PC-9 (cell line): ENCODE measurements at regions of chr6 and their contacts with region 1.

Region 1: DNA sequence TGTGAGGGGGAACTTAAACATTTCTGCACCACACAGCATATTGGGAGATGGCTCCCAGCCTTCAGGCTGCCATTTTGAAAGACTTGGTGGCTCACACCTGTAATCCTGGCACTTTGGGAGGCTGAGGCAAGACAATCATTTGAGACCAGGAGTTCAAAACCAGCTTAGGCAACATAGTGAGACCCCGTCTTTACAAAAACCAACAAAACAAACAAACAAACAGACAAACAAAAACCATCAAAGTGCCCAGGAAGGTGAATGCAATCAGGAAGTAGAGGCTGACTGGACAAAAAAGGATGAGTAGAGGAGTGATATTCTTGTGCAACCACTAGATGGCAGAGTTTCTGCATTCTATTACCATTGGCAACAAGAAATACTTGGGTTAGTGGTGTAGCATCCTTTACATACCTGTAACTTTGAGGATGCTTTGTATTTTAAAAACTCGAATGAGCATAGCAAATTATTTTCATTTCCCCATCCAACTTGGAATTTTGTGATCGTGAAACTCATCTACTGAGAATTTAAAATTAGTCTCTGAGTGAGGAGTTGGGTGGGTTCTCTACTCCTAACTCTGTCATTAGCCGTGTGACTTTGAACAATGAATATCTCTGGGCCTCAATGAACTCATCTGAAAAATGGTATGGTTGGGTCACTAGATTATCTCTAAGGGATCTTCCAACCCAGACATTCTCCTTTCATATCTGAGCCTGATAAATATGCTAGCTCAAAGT is 84.4 kb downstream of the CRYBG1 start:
- DNase-seq: peak; percentile 15 to 69
- H3K4me3 ChIP-seq: no peak overlapping the region
- H3K27ac ChIP-seq: no peak overlapping the region
- H3K4me1 ChIP-seq: peaks cover 24% of the 10 kb centered on the region
- H3K27me3 ChIP-seq: no peaks in the 10 kb centered on the region
- CTCF ChIP-seq: peak; percentile 89

Region 2: DNA sequence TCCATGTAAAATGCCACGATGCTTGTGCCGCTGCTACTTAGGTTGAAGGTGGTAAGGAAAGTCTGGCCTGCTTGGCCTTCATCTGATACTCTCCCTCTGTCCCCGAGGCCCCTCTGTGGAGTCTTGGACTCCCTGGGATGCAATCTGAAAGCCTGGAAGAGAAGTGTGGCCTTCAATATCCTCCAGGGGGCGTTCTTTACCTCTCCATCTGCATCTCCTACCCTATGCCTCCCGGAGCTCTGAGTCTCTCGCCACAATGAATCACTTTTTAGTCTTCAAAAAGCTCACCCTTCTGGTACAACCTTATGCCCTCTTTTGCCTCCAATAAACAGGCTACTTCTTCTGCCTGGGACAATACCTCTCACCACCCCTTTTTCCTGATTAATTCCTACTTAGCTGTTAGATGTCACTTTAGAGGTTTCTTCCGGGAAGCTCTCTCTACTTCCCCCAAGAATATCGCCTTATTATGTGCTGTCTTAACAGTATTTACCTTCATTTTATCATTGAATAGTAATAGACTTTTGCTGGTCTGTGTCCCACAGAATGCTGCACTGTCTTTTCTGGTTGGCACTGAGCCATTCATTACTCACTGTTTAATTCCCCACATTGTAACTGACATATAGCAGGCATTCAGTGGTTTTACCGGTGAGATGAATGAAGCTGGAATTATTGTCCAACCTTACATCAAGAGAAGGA is 105.5 kb before region 1 on chr6:
- CTCF ChIA-PET with region 1: interaction called, 8 read pairs
- POLR2A ChIA-PET with region 1: no interaction called
- intact Hi-C with region 1: loop called (anchors 1 kb)
- DNase-seq: peak; percentile 65 to 75
- H3K4me3 ChIP-seq: no peak overlapping the region
- H3K27ac ChIP-seq: peak overlapping the region; percentile 18; the same call in 1 of the 2 replicates
- H3K4me1 ChIP-seq: peaks cover 9% of the 10 kb centered on the region
- H3K27me3 ChIP-seq: no peaks in the 10 kb centered on the region
- CTCF ChIP-seq: peak; percentile 90

Region 3: DNA sequence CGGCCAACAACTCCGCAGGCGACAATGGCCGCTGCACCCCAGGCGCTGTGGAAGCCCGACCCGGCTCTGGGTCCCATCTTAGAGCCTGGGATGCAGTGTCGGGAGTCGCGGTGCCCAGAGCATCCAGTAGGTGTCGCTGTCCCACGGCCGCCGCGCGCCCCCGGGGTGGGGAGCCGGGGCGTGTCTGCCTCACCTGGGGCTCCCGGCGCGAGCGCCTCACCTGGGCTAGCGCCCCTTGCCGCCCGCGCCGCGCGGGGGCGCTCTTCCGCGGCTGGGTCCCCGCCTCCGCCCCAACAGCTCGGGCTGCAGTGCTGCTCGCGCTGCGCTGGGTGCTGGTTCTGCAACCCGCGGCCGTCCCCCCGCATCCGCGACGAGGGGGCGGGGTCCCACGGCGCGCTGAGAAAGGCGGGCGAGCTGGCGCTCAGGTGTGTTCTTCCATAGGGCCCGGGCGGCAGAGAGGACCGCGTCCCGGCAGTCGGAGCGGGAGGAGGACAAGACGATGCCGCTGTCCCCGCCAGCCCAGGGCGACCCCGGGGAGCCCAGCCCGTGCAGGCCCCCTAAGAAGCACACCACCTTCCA is 84.4 kb before region 1 on chr6 and contains the start of gene CRYBG1:
- CTCF ChIA-PET with region 1: interaction called, 4 read pairs
- POLR2A ChIA-PET with region 1: interaction called, 17 read pairs
- intact Hi-C with region 1: loop called (anchors 1 kb)
- DNase-seq: peak; percentile 75 to 94
- H3K4me3 ChIP-seq: peak within 1 kb of the TSS; percentile 86
- H3K27ac ChIP-seq: peak within 1 kb of the TSS; percentile 34; the same call in 1 of the 2 replicates
- H3K4me1 ChIP-seq: peaks cover 11% of the 10 kb centered on the region
- H3K27me3 ChIP-seq: no peaks in the 10 kb centered on the region
- CTCF ChIP-seq: peak; percentile 93
- total RNA-seq, gene CRYBG1: 42.7 and 49.3 TPM in 2 replicates

Region 4: GRCh38 chr6:106512048-106512967 is 67.4 kb after region 1 on chr6:
- CTCF ChIA-PET with region 1: no interaction called
- POLR2A ChIA-PET with region 1: interaction called, 16 read pairs
- intact Hi-C with region 1: loop called (anchors 5 kb)
- DNase-seq: peak; percentile 58 to 75
- H3K4me3 ChIP-seq: peak overlapping the region; percentile 76
- H3K27ac ChIP-seq: peak overlapping the region; percentile 53
- H3K4me1 ChIP-seq: peaks cover 42% of the 10 kb centered on the region
- H3K27me3 ChIP-seq: no peaks in the 10 kb centered on the region
- CTCF ChIP-seq: no peak

Region 5: DNA sequence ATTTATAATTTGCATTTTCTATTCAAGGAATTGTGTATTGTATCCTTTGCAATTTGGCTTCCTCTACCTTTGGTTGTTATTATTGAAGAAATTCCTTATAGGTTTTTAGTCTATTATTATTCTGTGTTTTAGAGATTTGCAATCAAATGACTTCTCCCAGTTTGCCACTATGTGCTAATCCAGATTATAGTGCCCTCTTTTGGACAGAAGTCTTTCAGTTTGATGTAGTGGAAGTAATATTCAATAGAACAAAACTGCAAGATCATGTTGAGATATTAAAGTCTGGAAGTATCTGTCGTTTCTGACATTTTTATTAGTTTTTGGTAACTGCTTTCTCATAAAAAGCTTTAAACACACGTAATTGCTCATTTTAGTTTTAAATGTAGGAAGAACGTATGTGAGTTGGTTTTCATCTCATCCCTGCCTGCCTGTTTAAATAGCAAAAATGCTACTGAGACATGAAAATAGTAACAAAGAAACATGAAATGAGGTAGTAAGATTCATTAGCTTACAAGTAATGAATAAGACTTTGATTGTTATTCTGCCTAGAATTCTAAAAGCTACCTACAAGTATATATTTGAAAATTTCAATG is 111.5 kb after region 1 on chr6:
- CTCF ChIA-PET with region 1: no interaction called
- POLR2A ChIA-PET with region 1: no interaction called
- intact Hi-C with region 1: loop called (anchors 2 kb)
- DNase-seq: peak in 1 of 2 experiments; percentile 49
- H3K4me3 ChIP-seq: no peak overlapping the region
- H3K27ac ChIP-seq: no peak overlapping the region
- H3K4me1 ChIP-seq: peaks cover 27% of the 10 kb centered on the region
- H3K27me3 ChIP-seq: no peaks in the 10 kb centered on the region
- CTCF ChIP-seq: peak; percentile 57

Region 6: GRCh38 chr6:106997390-106998158 is 552.6 kb after region 1 on chr6:
- CTCF ChIA-PET with region 1: no interaction called
- POLR2A ChIA-PET with region 1: no interaction called
- intact Hi-C with region 1: loop called (anchors 1 kb)
- DNase-seq: peak; percentile 57
- H3K4me3 ChIP-seq: no peak overlapping the region
- H3K27ac ChIP-seq: no peak overlapping the region
- H3K4me1 ChIP-seq: no peaks in the 10 kb centered on the region
- H3K27me3 ChIP-seq: no peaks in the 10 kb centered on the region
- CTCF ChIP-seq: peak; percentile 94

Region 7: DNA sequence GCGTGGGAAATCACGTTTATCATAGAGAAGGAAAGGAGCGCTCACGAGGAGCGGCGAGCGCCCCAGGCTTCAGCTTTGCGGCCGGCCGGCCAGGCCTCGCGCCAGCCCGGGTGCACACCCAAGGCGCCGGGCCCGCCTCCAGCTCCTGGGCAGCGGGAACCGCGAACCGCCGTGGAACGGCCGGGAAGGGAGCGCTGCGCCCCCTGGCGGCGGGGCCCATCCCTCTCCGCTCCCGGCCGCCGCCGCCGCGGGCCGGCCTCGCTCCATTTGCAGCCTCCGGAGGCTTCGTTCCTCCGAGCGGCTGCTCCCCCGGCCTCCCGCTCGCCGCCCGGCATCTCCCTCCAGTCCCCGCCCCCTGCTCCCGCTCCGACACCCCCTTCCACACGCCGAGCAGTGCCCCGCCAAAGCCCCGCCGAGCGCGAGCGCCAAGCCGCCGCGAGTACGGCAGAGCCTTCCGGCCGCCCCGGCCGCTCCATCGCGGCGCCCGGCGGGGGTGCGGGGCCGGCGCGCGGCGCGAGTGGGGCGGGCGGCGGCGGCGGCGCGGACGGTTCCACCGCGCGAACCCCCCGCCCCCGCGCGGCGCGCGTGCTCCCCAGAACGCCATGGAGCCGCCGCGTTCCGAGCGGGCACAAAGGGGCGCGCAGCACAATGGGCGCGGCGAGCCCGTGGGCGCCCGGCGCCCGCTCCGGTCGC is 669.4 kb after region 1 on chr6:
- CTCF ChIA-PET with region 1: no interaction called
- POLR2A ChIA-PET with region 1: no interaction called
- intact Hi-C with region 1: loop called (anchors 10 kb)
- DNase-seq: peak; percentile 61 to 87
- H3K4me3 ChIP-seq: peak overlapping the region; percentile 58
- H3K27ac ChIP-seq: no peak overlapping the region
- H3K4me1 ChIP-seq: peaks cover 8% of the 10 kb centered on the region; the same call in 1 of the 2 replicates
- H3K27me3 ChIP-seq: no peaks in the 10 kb centered on the region
- CTCF ChIP-seq: peak; percentile 65